RWPE1 (cell line): ENCODE measurements at regions of chr17 and their contacts with region 1.

Region 1: GRCh38 chr17:7823581-7824397 is 10.2 kb upstream of the KDM6B start:
- DNase-seq: no peak
- H3K27ac ChIP-seq: no peak overlapping the region
- CTCF ChIP-seq: no peak

Region 2: DNA sequence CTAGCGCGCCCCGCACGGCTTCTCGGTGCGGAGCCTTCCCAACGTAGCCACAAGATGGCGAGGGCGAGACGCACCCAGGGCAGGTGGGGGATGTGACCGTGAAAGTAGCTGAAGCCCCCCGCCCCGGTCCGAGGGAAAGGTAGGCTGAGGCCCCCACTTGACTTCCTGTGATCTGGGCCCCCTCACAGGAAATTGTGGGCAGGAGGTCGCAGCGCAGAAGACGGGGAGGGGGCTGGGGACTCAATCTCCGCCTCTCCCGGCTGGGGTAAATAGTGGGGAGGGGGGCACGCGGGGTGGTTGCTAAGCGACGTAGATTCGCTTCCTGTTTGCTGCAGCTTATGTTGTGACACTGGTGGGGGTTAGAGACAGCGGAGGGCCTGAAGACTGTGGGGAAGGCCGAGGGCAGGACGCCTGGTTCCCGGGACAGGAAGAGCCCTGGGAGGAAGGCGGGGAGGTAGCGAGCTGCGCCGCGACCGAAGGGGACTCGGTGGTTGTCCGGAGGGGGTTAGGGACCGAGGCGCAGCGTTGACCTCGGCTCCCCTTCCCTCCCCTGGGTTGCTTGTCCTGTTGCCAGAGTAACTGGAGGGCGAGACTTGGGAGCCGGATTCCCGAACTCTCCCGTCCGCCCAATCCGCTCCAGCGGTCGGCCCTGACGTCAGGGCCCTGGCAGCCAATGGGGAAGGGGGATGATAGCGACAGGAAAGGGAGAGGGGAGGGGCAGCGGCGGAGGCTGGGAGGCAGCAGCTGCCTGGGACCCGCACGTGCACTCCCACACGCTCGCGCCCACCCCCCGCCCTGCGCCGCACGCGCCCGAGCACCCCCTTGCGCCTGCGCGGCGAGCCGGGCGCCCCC is 11.4 kb after region 1 on chr17:
- CTCF ChIA-PET with region 1: interaction called, 10 read pairs
- POLR2A ChIA-PET with region 1: no interaction called
- DNase-seq: peak; percentile 96
- H3K27ac ChIP-seq: peak overlapping the region; percentile 99
- CTCF ChIP-seq: peak; percentile 82